Thyroid gland (tissue), 4 donors: ENCODE measurements at regions of chr22 and their contacts with region 1.

Region 1: DNA sequence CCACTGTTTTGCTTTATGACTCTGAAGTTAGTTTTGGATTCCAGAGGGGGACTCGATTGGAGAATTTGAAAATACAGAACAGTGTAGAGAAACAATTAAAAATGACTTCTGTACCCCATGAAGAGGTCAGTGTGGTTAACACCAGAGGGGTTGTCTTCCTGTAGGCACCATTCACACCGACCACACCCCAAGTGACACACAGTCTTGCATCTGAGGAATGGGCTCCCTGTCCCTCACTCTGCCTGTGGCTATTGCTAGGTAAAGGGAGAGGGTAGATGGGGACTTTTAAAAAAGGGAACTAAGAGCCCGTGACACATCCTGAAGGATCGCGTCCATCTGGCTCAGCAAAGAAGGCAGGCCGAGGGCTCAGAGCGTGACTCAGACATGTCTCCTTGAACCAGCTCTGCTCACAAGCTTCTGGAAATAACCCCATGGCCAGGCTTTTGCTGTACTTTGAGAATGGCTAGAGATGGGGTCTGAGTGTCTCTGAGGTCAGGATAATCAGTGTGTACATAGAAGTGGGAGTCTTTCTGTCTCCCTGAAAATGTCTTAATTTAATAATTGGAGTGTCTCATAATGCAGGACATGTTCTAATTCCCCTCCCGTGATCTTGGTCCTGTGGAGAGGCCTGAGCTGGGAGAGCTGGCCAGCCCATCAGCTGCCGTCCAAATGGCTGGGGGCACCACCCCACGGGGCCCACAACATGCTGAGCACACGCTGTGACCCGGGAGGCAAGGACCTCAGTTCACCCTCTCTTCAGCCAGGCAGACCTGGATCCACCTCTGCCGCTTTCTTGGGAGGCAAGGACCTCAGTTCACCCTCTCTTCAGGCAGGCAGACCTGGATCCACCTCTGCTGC is 39.3 kb downstream of the SGSM1 start:
- DNase-seq: no peak
- H3K4me3 ChIP-seq: no peak overlapping the region
- H3K27ac ChIP-seq: no peak overlapping the region
- H3K4me1 ChIP-seq: no peaks in the 10 kb centered on the region
- H3K27me3 ChIP-seq: no peaks in the 10 kb centered on the region
- CTCF ChIP-seq: no peak
- POLR2A ChIP-seq: no peak

Region 2: DNA sequence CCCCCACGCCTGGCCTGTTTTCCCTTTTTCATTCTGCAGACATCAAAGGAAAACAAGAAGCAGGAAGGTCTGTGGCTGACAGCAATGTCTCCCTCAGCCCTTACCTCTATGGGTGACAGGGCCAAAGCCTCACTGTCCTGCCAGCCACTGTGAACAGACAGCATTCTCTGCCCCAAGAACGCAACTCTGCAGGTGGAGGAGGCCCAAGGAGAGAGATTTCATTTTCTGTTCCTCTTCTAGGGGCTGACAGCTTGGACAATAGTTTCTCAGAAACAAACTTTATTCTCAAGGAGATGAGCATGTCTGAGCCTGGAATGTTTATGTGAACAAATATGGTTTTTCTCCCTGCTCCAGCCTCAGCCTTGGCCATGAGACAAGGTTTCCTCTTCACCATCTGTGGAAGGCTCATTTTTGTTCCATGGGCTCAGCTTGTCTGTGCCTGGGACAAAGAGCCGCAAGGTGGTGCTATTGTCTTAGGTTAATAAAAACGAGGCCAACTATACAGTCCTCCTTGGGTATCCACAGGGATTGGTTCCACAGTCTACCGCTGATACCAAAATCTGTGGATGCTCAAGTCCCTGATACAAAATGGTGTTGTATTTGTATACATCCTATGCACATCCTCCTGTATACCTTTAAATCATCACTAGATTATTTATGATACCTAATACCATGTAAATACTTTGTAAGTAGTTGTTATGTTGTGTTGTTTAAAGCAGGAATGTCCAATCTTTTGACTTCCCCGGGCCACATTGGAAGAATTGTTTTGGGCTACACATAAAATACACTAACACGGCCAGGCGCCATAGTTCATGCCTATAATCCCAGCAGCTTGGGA is 76.5 kb before region 1 on chr22:
- intact Hi-C with region 1: loop called (anchors 5 kb)
- DNase-seq: peak; percentile 70 to 76
- H3K4me3 ChIP-seq: no peak overlapping the region
- H3K27ac ChIP-seq: no peak overlapping the region
- H3K4me1 ChIP-seq: no peaks in the 10 kb centered on the region
- H3K27me3 ChIP-seq: no peaks in the 10 kb centered on the region
- CTCF ChIP-seq: peak; percentile 31 to 63 (median 56)
- POLR2A ChIP-seq: no peak